ENCODE measurements at regions of chr10 and their contacts with region 1.

Region 1: GRCh38 chr10:84452003-84452402 is 123.6 kb downstream of the CCSER2 start:
- DNase-seq: no peak
- ATAC-seq: no peak
- H3K4me3 ChIP-seq: no peak overlapping the region
- H3K27ac ChIP-seq: no peak overlapping the region
- H3K4me1 ChIP-seq: no peaks in the 10 kb centered on the region
- H3K27me3 ChIP-seq: no peaks in the 10 kb centered on the region
- CTCF ChIP-seq: no peak

Region 2: DNA sequence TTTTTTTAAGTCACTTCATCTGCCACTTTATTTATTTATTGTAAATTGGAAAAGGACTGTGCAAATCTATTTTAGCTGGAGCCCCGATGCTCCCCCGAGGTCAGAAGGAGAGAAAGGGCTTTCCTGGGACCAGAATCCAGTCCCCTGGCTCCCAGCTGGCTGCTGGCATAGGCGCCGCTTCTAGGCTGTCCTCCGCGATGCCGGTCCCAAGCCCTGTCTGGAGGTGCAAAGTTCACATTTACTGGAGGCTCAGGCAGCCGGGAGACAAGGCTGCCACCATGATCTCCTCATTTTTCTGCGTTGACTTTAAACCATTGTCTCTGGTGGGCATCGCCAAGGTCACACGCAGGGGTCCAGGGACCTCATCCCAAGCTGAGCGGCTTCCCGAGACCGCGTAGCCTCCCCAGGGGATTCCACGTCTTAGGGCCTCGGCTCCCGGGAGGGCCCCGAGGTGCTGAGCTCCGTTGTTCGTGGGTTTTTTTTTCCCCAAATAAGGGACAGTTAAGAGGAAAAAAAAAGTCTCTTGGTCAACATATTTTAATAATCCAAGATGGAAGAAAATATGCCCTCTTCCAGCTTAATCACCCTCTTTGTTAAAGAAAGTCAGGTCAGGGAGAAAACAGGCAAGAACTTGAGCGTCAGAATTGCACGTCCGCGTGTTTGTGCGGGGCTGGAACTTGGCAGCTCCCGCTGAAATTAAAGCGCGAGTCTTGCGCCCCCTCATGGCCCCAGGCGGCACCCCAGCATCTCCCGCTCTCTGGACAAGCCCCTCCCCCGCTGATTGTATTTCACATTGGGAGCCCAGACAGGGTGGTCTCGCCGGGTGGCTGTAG is 195.3 kb before region 1 on chr10:
- CTCF ChIA-PET with region 1: no interaction called
- POLR2A ChIA-PET with region 1: interaction called, 11 read pairs
- in situ Hi-C with region 1: no loop called
- intact Hi-C with region 1: no loop called
- DNase-seq: no peak
- ATAC-seq: peak; percentile 83
- H3K4me3 ChIP-seq: peak overlapping the region; percentile 26 to 55
- H3K27ac ChIP-seq: no peak overlapping the region
- H3K4me1 ChIP-seq: no peaks in the 10 kb centered on the region
- H3K27me3 ChIP-seq: no peaks in the 10 kb centered on the region; the same call in 1 of the 2 replicates
- CTCF ChIP-seq: peak; percentile 90

Measured in Panc1 (cell line).